Naive thymus-derived CD4-positive, alpha-beta T cell (primary cell): ENCODE measurements at regions of chr20 and their contacts with region 1.

Region 1: GRCh38 chr20:32541323-32542258 is 43.5 kb downstream of the NOL4L start:
- DNase-seq: no peak
- ATAC-seq: no peak
- H3K4me3 ChIP-seq: no peak overlapping the region
- H3K4me3 Mint-ChIP-seq: peak overlapping the region in 8 of 10 donors; percentile 56 to 99 (median 83)
- H3K27ac ChIP-seq: peak overlapping the region; percentile 90
- H3K27ac Mint-ChIP-seq: peak overlapping the region; percentile 95 to 100 (median 98)
- H3K4me1 ChIP-seq: peaks cover 52 to 54% of the 10 kb centered on the region in 2 donors
- H3K4me1 Mint-ChIP-seq: peaks cover 51 to 94% (median 76%) of the 10 kb centered on the region in 7 donors
- H3K27me3 ChIP-seq: no peaks in the 10 kb centered on the region
- H3K27me3 Mint-ChIP-seq: no peaks in the 10 kb centered on the region

Region 2: DNA sequence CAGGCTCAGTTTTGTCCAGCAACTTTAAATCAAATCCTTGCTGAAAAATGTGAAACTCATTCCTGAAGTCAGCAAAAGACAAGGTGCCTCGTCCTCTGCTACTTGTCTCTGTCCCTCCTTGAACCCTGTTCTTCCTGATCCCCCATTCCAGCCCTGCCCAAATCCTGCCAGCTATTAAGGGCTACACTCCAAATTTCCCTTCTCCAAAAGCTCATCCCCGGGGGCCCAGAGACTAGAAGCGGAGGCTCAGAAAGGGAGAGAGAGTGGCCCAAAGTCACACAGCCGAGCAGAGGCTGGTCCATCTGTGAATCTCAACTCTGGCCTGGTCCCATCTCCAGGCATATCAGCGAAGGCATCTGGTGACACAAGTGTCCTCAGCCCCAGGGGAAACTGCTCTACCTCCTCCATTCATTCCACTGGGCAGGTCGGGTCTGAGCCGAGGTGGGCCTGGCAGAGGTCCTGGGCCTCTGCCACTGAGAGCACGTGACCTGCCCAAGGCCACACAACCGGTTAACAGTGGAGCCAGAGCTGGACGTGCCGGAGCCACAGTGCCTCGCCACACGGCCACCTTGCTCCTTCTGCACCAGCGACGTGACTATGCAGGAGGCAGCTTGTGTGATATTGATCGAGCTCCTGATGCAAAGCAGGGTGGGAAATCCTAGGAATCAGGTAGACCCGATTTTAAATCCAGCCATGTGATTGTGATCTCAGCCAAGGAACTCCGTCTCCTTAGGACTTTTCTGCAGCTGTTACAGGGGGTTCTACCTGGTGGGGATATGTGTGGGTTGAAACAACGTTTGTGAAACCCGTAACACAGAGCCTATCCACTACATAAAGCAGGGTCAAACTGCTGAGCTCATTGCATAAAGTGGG is 15.0 kb after region 1 on chr20:
- CTCF ChIA-PET with region 1: interaction called, 10 read pairs
- POLR2A ChIA-PET with region 1: interaction called, 12 read pairs
- intact Hi-C with region 1: no loop called
- DNase-seq: no peak
- ATAC-seq: no peak
- H3K4me3 ChIP-seq: no peak overlapping the region
- H3K4me3 Mint-ChIP-seq: peak overlapping the region in 7 of 10 donors; percentile 0 to 63 (median 27)
- H3K27ac ChIP-seq: no peak overlapping the region
- H3K27ac Mint-ChIP-seq: peak overlapping the region in 8 of 9 donors; percentile 49 to 94 (median 86)
- H3K4me1 ChIP-seq: peaks cover 0 to 45% of the 10 kb centered on the region in 2 donors
- H3K4me1 Mint-ChIP-seq: peaks cover 33 to 88% (median 77%) of the 10 kb centered on the region in 7 donors
- H3K27me3 ChIP-seq: no peaks in the 10 kb centered on the region
- H3K27me3 Mint-ChIP-seq: no peaks in the 10 kb centered on the region